A673 (cell line): ENCODE measurements at regions of chr20 and their contacts with region 1.

Region 1: GRCh38 chr20:18632196-18633009 is 44.5 kb downstream of the DTD1 start:
- DNase-seq: peak; percentile 74
- H3K4me3 ChIP-seq: no peak overlapping the region
- H3K27ac ChIP-seq: no peak overlapping the region
- H3K4me1 ChIP-seq: no peaks in the 10 kb centered on the region
- H3K27me3 ChIP-seq: no peaks in the 10 kb centered on the region
- CTCF ChIP-seq: peak; percentile 96

Region 2: GRCh38 chr20:18412221-18412901 is 220.0 kb before region 1 on chr20:
- CTCF ChIA-PET with region 1: no interaction called
- POLR2A ChIA-PET with region 1: no interaction called
- intact Hi-C with region 1: loop called (anchors 10 kb)
- DNase-seq: no peak
- H3K4me3 ChIP-seq: no peak overlapping the region
- H3K27ac ChIP-seq: no peak overlapping the region
- H3K4me1 ChIP-seq: no peaks in the 10 kb centered on the region
- H3K27me3 ChIP-seq: no peaks in the 10 kb centered on the region
- CTCF ChIP-seq: no peak